ENCODE measurements at regions of chr16 and their contacts with region 1.

Region 1: GRCh38 chr16:85114909-85115567 is 2.8 kb upstream of the CIBAR2 start:
- DNase-seq: peak; percentile 88 to 89 (median 88)
- ATAC-seq: peak; percentile 94 to 98 (median 98)
- H3K4me3 ChIP-seq: peak overlapping the region in 1 of 3 donors; percentile 31
- H3K27ac ChIP-seq: peak overlapping the region in 2 of 3 donors; percentile 33 to 47
- H3K4me1 ChIP-seq: peaks cover 0 to 10% (median 0%) of the 10 kb centered on the region in 4 donors
- H3K27me3 ChIP-seq: no peaks in the 10 kb centered on the region
- CTCF ChIP-seq: peak; percentile 88 to 97 (median 92)
- POLR2A ChIP-seq: no peak

Region 2: GRCh38 chr16:85234310-85235204 is 119.5 kb after region 1 on chr16:
- intact Hi-C with region 1: loop called in 1 of 2 experiments (anchors 10 kb)
- DNase-seq: peak in 2 of 3 donors; percentile 50 to 62
- ATAC-seq: peak; percentile 64 to 78 (median 68)
- H3K4me3 ChIP-seq: peak overlapping the region in 1 of 3 donors; percentile 2
- H3K27ac ChIP-seq: no peak overlapping the region
- H3K4me1 ChIP-seq: no peaks in the 10 kb centered on the region
- H3K27me3 ChIP-seq: no peaks in the 10 kb centered on the region
- CTCF ChIP-seq: no peak
- POLR2A ChIP-seq: no peak

Region 3: GRCh38 chr16:85275533-85276249 is 160.7 kb after region 1 on chr16:
- intact Hi-C with region 1: loop called in 1 of 2 experiments (anchors 10 kb)
- DNase-seq: peak; percentile 75 to 80 (median 77)
- ATAC-seq: peak; percentile 75 to 84 (median 84)
- H3K4me3 ChIP-seq: no peak overlapping the region
- H3K27ac ChIP-seq: no peak overlapping the region
- H3K4me1 ChIP-seq: peaks cover 0 to 9% (median 3%) of the 10 kb centered on the region in 4 donors
- H3K27me3 ChIP-seq: no peaks in the 10 kb centered on the region
- CTCF ChIP-seq: peak; percentile 88 to 92 (median 90)
- POLR2A ChIP-seq: no peak

Measured in right lobe of liver (tissue), 6 donors.